Activated B cell treated with CpG ODN at 0.5 μM for 24 hours (primary cell): ENCODE measurements at regions of chrX and their contacts with region 1.

Region 1: DNA sequence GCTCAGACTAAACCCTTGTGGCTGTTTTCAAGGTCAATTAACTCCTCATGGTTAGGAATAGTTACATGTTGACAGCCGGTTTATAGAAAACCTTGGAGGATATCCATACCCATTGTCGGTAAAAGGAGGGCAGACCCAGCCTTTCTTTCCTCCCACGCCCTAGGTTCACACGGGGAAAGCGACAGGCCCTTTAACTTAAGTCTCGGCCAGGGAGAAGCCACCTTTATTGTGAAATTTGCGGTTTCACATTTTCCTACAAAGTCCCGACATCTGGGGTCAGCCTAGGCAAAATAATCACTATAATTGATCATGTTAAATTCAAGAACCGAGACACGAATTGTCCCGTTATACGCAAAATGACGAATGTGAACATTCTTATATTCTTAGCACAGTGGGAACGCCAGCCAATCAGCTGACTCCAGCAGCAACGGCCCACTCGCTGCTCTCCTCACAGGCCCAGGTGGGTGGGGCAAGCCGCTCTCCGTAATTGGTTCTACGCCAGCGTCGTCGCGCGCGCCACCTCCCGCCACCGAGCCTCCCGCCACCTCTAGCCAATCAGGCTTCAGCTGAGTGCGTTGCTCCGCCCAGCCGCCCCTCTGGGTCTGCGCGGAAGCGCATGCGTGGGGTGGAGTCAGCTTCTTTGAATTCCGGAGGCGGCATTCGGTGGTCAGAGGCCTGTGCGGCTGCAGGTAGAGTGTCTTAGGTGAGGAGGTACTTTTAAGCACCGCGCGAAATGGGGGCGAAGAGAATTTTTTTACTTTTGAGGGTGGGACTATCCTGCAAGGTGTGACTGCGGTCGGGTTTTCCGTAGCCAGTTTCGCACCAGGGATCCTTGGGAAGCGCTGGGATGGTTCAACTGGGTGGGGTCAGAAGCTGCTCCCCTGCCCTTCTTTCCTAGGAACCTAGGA is at the start of gene CENPI:
- DNase-seq: peak; percentile 78
- ATAC-seq: peak; percentile 99
- H3K4me3 Mint-ChIP-seq: peak within 1 kb of the TSS; percentile 86
- H3K27ac Mint-ChIP-seq: peak within 1 kb of the TSS; percentile 91
- H3K4me1 Mint-ChIP-seq: peaks cover 9% of the 10 kb centered on the region
- H3K27me3 Mint-ChIP-seq: no peaks in the 10 kb centered on the region
- CTCF ChIP-seq: no peak
- total RNA-seq, gene CENPI: 2.6 and 3.1 TPM in 2 replicates

Region 2: GRCh38 chrX:100819837-100820666 is 277.7 kb before region 1 on chrX and contains the start of gene CSTF2:
- CTCF ChIA-PET with region 1: no interaction called
- POLR2A ChIA-PET with region 1: no interaction called
- intact Hi-C with region 1: loop called (anchors 1 kb)
- DNase-seq: peak; percentile 68
- ATAC-seq: peak; percentile 96
- H3K4me3 Mint-ChIP-seq: peak within 1 kb of the TSS; percentile 93
- H3K27ac Mint-ChIP-seq: peak within 1 kb of the TSS; percentile 94
- H3K4me1 Mint-ChIP-seq: peaks cover 4% of the 10 kb centered on the region
- H3K27me3 Mint-ChIP-seq: peaks cover 5% of the 10 kb centered on the region
- CTCF ChIP-seq: no peak
- total RNA-seq, gene CSTF2: 27.7 TPM in 2 replicates

Region 3: DNA sequence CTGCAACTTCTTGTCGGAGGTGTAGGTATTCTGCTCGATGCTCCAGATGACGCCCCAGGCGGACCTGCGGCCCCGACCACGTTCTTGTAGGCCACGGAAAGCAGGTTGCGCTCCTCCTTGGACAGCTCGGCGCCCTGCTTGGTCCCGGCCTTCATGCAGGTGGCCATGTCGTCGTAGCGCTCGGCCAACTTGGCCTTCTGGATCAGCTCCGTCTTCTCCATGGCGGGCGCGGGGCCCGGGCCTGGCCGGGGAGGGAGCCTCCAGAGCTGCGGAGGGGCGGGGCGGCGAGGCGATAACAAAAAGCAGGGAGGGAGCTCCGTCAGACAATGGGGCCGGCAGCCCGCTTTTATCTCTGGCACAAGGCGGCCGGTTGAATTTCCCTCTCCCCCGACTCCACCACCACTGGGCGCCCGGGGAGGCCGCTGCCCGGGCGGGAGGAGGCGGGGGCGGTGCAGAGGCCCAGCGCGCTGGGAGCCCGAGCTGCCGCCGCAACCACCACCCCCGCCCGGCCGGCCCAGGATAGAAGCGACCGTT is 93.5 kb after region 1 on chrX:
- CTCF ChIA-PET with region 1: no interaction called
- POLR2A ChIA-PET with region 1: no interaction called
- intact Hi-C with region 1: no loop called
- DNase-seq: no peak
- ATAC-seq: no peak
- H3K4me3 Mint-ChIP-seq: no peak overlapping the region
- H3K27ac Mint-ChIP-seq: no peak overlapping the region
- H3K4me1 Mint-ChIP-seq: no peaks in the 10 kb centered on the region
- H3K27me3 Mint-ChIP-seq: peaks cover 2% of the 10 kb centered on the region
- CTCF ChIP-seq: no peak